CD4-positive, alpha-beta T cell (primary cell): ENCODE measurements at regions of chr2 and their contacts with region 1.

Region 1: GRCh38 chr2:236512902-236513435 is 56.7 kb upstream of the ACKR3 start:
- DNase-seq: peak; percentile 52 to 82 (median 65)
- ATAC-seq: peak; percentile 93
- H3K4me3 ChIP-seq: no peak overlapping the region
- H3K4me3 Mint-ChIP-seq: no peak overlapping the region
- H3K27ac ChIP-seq: no peak overlapping the region
- H3K27ac Mint-ChIP-seq: no peak overlapping the region
- H3K4me1 ChIP-seq: peaks cover 7% of the 10 kb centered on the region
- H3K4me1 Mint-ChIP-seq: no peaks in the 10 kb centered on the region
- H3K27me3 ChIP-seq: no peaks in the 10 kb centered on the region
- H3K27me3 Mint-ChIP-seq: no peaks in the 10 kb centered on the region
- CTCF ChIP-seq: peak; percentile 89

Region 2: DNA sequence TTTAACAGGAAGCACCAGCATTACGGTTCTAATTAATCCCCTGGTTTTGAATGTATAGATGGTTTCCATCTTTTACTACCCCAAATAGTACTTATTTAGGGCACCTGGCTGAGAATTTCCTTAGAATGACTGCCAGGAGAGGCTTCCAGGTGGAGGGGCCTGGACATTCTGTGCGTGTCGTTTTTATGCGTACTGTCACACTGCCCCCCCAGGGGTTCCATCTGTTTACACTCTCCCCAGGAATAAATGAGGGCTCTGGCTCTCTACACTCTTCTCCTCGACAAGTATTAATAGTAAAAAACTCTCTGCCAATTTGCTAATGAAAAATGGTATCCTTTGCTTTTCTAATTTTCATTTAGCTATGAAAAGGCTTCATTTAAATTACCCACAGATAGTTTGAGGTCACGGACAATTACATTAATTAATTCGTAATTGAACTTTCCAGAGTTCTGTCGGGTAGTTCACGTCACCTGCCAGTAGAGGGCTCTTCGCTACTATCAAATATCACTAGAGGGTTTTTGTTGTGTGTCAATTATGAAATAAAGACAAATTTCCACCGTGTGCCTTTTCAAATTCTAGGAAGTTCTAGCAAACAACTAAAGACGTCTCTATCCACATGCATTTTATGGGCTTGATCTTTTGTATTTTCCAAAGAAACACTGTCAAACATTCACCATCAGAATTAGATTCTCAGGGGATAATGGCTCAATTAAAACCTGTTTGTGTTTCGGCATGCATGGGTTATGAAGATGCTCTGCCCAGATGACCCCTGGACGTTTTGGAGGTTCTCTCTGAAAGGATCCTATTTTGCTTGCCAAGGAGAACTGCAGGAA is 160.0 kb before region 1 on chr2:
- CTCF ChIA-PET with region 1: no interaction called
- POLR2A ChIA-PET with region 1: no interaction called
- intact Hi-C with region 1: loop called (anchors 2 to 5 kb)
- DNase-seq: peak in 8 of 14 experiments; percentile 18 to 70 (median 35)
- ATAC-seq: peak; percentile 63
- H3K4me3 ChIP-seq: no peak overlapping the region
- H3K4me3 Mint-ChIP-seq: no peak overlapping the region
- H3K27ac ChIP-seq: no peak overlapping the region
- H3K27ac Mint-ChIP-seq: no peak overlapping the region
- H3K4me1 ChIP-seq: no peaks in the 10 kb centered on the region
- H3K4me1 Mint-ChIP-seq: peaks cover 6% of the 10 kb centered on the region
- H3K27me3 ChIP-seq: peaks cover 5 to 6% of the 10 kb centered on the region in 2 experiments
- H3K27me3 Mint-ChIP-seq: peaks cover 13% of the 10 kb centered on the region
- CTCF ChIP-seq: peak; percentile 97

Region 3: GRCh38 chr2:236536727-236537398 is 23.9 kb after region 1 on chr2:
- CTCF ChIA-PET with region 1: interaction called, 5 read pairs
- POLR2A ChIA-PET with region 1: interaction called, 12 read pairs
- intact Hi-C with region 1: no loop called
- DNase-seq: peak; percentile 38 to 85 (median 57)
- ATAC-seq: peak; percentile 96
- H3K4me3 ChIP-seq: peak overlapping the region; percentile 81
- H3K4me3 Mint-ChIP-seq: peak overlapping the region; percentile 96
- H3K27ac ChIP-seq: peak overlapping the region; percentile 58 to 62
- H3K27ac Mint-ChIP-seq: peak overlapping the region; percentile 93
- H3K4me1 ChIP-seq: peaks cover 36% of the 10 kb centered on the region
- H3K4me1 Mint-ChIP-seq: peaks cover 52% of the 10 kb centered on the region
- H3K27me3 ChIP-seq: no peaks in the 10 kb centered on the region
- H3K27me3 Mint-ChIP-seq: no peaks in the 10 kb centered on the region
- CTCF ChIP-seq: no peak

Region 4: GRCh38 chr2:237026981-237027711 is 514.2 kb after region 1 on chr2:
- CTCF ChIA-PET with region 1: interaction called, 4 read pairs
- POLR2A ChIA-PET with region 1: no interaction called
- intact Hi-C with region 1: loop called (anchors 1 to 2 kb)
- DNase-seq: peak; percentile 11 to 64 (median 36)
- ATAC-seq: peak; percentile 61
- H3K4me3 ChIP-seq: no peak overlapping the region
- H3K4me3 Mint-ChIP-seq: no peak overlapping the region
- H3K27ac ChIP-seq: no peak overlapping the region
- H3K27ac Mint-ChIP-seq: no peak overlapping the region
- H3K4me1 ChIP-seq: no peaks in the 10 kb centered on the region
- H3K4me1 Mint-ChIP-seq: no peaks in the 10 kb centered on the region
- H3K27me3 ChIP-seq: no peaks in the 10 kb centered on the region
- H3K27me3 Mint-ChIP-seq: no peaks in the 10 kb centered on the region
- CTCF ChIP-seq: peak; percentile 61

Region 5: DNA sequence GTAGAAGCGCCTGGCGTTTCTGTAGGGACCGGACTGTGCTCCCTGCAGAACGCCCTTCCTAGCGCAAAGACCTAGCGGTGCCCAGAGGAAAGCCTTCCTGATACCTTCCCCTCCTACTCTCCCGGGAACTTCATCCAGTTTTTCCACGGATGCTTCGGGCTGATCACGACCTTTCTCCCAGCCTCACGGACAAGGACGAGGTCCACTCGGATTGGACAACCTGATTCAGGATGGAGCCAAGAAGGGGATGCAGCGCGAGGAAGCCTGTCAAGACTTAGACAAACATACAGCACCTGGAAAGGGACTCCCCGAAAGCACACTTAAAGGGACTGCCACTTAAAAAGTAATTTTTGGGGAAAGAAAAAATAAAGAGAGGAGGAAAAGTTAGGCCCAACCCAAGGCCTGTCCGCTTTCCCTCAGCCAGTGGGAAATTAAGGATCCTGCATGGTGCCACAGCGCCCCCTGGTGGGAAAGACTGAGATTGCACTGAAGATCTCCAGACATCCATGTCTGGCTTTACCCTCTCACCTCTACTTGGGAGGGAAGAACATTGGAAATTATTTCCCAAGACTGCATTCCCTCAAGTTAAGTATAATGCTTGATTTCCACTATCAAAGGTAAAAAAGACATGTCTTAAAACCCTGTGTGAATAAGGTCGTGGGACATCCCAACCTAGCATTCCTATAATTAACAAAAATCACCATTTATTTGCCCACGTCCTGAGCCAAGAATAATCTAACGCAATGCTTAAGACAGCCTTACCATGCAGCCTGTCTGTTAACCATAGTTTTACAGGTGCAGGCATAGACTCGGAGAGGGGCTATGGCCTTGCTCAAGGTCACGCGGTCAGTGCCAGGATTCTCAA is 559.3 kb after region 1 on chr2:
- CTCF ChIA-PET with region 1: no interaction called
- POLR2A ChIA-PET with region 1: no interaction called
- intact Hi-C with region 1: loop called in 1 of 2 experiments (anchors 2 kb)
- DNase-seq: peak; percentile 49 to 82 (median 68)
- ATAC-seq: peak; percentile 48
- H3K4me3 ChIP-seq: no peak overlapping the region
- H3K4me3 Mint-ChIP-seq: no peak overlapping the region
- H3K27ac ChIP-seq: no peak overlapping the region
- H3K27ac Mint-ChIP-seq: no peak overlapping the region
- H3K4me1 ChIP-seq: no peaks in the 10 kb centered on the region
- H3K4me1 Mint-ChIP-seq: no peaks in the 10 kb centered on the region
- H3K27me3 ChIP-seq: no peaks in the 10 kb centered on the region
- H3K27me3 Mint-ChIP-seq: no peaks in the 10 kb centered on the region
- CTCF ChIP-seq: peak; percentile 98